Spleen (tissue), 13 donors: ENCODE measurements at regions of chr10 and their contacts with region 1.

Region 1: DNA sequence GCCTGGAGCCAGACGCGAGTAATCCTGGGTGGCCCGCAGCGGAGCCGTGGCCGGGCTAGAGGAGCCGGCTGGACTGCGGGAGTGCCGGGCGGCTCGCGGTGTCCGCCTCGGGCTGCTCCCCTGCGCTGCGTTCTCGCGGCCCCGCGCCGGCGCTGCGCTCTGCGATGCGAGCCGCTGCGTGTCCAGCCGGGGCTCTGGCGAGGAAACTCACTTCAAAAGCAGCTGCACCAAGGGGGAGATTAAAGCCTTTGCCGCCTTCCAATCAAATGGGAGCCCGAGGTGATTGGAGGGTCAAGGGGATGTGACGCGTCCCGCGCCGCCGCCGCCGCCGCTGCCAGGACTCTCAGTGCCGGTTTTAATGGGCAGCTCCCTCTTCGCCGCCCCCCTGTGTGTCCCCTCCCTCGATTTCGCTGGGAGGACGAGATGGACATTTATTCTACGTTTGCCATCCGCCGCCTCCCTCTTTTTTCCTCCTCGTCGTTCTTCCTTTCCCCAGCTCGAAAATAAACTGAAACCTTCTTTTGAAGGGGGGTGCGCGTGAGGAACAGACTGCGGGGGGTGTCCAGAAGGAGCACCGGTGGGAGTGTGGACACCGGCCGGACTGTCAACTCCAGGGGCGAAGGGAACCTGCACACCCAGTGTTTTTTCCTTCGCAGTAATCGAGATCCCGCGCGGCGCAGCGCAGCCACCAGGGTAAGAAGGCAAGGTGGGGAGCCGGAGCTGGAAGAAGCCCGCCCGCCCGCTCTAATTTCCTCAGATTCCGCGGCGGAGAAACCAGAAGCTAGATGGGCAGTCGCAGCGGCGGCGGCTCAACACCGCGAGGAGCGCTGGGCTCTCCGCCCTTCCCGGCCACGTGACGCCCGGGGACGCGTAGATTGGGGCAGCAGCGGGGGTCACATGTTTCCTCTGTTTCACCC is at the start of gene ZNF503:
- DNase-seq: peak; percentile 94
- H3K4me3 ChIP-seq: peak within 1 kb of the TSS; percentile 42 to 90 (median 77)
- H3K27ac ChIP-seq: peak within 1 kb of the TSS; percentile 82 to 95 (median 90)
- H3K4me1 ChIP-seq: peaks cover 2 to 90% (median 68%) of the 10 kb centered on the region in 6 donors
- H3K27me3 ChIP-seq: peaks cover 0 to 100% (median 76%) of the 10 kb centered on the region in 7 donors
- CTCF ChIP-seq: peak in 5 of 11 experiments; percentile 10 to 25 (median 23)
- POLR2A ChIP-seq: peak in 2 of 3 donors; percentile 34 to 97
- total RNA-seq, gene ZNF503: 7.8 to 25.6 (median 10.6) TPM

Region 2: GRCh38 chr10:75294866-75295701 is 106.7 kb before region 1 on chr10:
- intact Hi-C with region 1: loop called (anchors 5 kb)
- DNase-seq: peak; percentile 89
- H3K4me3 ChIP-seq: peak overlapping the region; percentile 16 to 77 (median 50)
- H3K27ac ChIP-seq: peak overlapping the region; percentile 71 to 93 (median 90)
- H3K4me1 ChIP-seq: peaks cover 0 to 36% (median 25%) of the 10 kb centered on the region in 6 donors
- H3K27me3 ChIP-seq: peaks cover 0 to 46% (median 0%) of the 10 kb centered on the region in 7 donors
- CTCF ChIP-seq: peak in 5 of 11 experiments; percentile 13 to 38 (median 30)
- POLR2A ChIP-seq: peak in 1 of 3 donors; percentile 10

Region 3: GRCh38 chr10:76036111-76036940 is 634.5 kb after region 1 on chr10:
- intact Hi-C with region 1: loop called (anchors 5 kb)
- DNase-seq: peak; percentile 85
- H3K4me3 ChIP-seq: peak overlapping the region in 1 of 8 donors; percentile 34
- H3K27ac ChIP-seq: no peak overlapping the region
- H3K4me1 ChIP-seq: peaks cover 0 to 22% (median 9%) of the 10 kb centered on the region in 6 donors
- H3K27me3 ChIP-seq: no peaks in the 10 kb centered on the region
- CTCF ChIP-seq: peak; percentile 51 to 91 (median 79)
- POLR2A ChIP-seq: no peak

Region 4: DNA sequence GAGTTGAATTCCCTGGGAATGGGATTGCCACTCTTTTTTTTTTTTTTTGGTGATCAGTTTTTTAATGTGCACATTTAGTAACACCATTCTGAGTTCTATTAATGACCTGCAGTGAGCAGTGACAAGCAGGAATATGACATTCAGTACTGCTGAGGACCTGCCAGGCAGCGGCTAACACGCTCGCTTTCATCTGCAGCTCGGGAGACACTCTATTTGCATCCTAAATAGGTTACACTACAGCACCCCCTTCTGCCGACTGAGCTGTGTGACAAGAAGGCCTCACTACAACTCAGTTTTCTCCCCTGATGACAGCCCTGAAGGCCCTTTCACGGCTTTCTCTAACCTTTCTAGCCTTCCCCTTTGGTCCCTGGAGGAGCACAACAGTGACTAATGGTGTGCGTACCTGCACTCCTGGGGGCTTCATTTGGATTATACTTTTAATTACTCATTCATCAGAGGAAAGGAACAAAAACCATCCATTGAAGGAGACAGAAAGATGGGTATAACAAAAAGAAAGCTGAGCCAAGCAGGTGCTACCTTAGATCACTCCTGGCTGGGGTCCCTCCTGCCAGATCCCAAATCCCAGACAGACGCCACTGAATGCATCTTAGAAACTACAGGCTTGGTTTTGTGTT is 902.0 kb after region 1 on chr10:
- intact Hi-C with region 1: loop called (anchors 10 kb)
- DNase-seq: no peak
- H3K4me3 ChIP-seq: no peak overlapping the region
- H3K27ac ChIP-seq: no peak overlapping the region
- H3K4me1 ChIP-seq: peaks cover 0 to 44% (median 6%) of the 10 kb centered on the region in 6 donors
- H3K27me3 ChIP-seq: no peaks in the 10 kb centered on the region
- CTCF ChIP-seq: peak in 9 of 11 experiments; percentile 22 to 65 (median 45)
- POLR2A ChIP-seq: no peak

Region 5: DNA sequence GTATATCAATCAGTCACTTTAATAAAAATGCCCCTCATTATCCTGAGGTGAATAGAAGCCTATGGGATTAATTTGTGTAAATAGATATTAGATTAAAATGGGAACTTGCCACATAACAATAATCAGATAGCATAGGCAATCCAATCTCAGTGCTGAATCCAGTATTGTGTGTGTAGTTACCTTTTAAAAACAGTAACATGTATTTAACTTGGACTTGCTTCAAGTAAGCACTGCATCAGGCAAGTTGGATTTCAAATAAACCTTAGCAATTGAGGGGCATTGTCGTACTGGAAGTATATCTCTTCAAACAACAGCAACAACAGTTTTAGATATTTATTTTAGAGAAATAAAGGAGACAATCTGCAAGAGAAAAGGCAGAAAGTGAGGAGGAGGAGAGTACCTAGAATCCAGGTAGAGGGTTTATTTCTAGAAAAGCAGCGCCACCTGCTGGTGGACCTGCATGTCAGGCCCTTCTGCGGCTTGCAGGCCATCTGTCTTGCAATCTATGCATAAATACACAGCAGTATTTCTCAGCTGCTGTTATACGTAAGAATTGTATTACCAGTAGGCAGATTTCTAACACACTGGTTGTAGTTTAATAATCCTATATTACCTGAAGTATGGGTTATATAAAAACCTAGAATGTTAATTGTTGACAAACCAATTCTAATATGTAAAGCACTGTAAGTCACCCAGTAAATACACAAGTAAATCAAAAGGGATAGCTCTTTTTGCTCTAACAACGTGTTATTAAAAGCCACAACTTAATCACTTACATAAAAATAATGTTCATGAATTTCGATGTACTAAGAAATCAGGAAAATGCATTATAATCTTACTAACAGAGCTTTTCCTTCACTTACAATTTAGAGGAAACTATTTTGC is 1583.0 kb after region 1 on chr10:
- intact Hi-C with region 1: loop called (anchors 10 kb)
- DNase-seq: peak; percentile 86
- H3K4me3 ChIP-seq: no peak overlapping the region
- H3K27ac ChIP-seq: no peak overlapping the region
- H3K4me1 ChIP-seq: peaks cover 0 to 6% (median 0%) of the 10 kb centered on the region in 6 donors
- H3K27me3 ChIP-seq: peaks cover 0 to 1% (median 0%) of the 10 kb centered on the region in 7 donors
- CTCF ChIP-seq: peak; percentile 19 to 92 (median 87)
- POLR2A ChIP-seq: no peak